CD4-positive, alpha-beta memory T cell (primary cell): ENCODE measurements at regions of chr5 and their contacts with region 1.

Region 1: DNA sequence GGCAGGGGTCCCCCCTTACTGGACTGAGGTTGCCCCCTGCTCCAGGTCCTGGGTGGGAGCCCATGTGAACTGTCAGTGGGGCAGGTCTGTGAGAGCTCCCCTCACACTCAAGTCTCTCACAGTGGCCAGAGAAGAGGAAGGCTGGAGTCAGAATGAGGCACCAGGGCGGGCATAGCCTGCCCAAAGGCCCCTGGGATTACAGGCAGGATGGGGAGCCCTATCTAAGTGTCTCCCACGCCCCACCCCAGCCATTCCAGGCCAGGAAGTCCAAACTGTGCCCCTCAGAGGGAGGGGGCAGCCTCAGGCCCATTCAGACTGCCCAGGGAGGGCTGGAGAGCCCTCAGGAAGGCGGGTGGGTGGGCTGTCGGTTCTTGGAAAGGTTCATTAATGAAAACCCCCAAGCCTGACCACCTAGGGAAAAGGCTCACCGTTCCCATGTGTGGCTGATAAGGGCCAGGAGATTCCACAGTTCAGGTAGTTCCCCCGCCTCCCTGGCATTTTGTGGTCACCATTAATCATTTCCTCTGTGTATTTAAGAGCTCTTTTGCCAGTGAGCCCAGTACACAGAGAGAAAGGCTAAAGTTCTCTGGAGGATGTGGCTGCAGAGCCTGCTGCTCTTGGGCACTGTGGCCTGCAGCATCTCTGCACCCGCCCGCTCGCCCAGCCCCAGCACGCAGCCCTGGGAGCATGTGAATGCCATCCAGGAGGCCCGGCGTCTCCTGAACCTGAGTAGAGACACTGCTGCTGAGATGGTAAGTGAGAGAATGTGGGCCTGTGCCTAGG is at the start of gene CSF2:
- DNase-seq: no peak
- H3K4me3 ChIP-seq: no peak within 1 kb of the TSS
- H3K4me3 Mint-ChIP-seq: peak within 1 kb of the TSS in 5 of 8 donors; percentile 1 to 45 (median 38)
- H3K27ac ChIP-seq: no peak within 1 kb of the TSS
- H3K27ac Mint-ChIP-seq: peak within 1 kb of the TSS; percentile 13 to 61 (median 36)
- H3K4me1 ChIP-seq: peaks cover 52% of the 10 kb centered on the region
- H3K4me1 Mint-ChIP-seq: peaks cover 24 to 84% (median 50%) of the 10 kb centered on the region in 4 donors
- H3K27me3 ChIP-seq: no peaks in the 10 kb centered on the region
- H3K27me3 Mint-ChIP-seq: no peaks in the 10 kb centered on the region
- total RNA-seq, gene CSF2: not detected

Region 2: DNA sequence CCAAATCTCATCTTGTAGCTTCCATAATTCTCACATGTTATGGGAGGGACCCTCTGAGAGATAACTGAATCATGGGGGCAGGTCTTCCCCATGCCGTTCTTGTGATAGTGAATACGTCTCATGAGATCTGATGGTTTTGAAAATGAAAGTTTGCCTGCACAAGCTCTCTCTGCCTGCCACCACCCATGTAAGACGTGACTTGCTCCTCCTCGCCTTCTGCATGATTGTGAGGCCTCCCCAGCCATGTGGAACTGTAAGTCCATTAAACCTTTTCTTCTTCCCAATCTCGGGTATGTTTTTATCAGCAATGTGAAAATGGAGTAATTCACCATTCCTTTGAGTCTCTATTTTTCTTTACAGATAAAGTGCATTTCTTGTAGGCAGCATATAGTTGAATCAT is 209.7 kb before region 1 on chr5:
- CTCF ChIA-PET with region 1: no interaction called
- POLR2A ChIA-PET with region 1: no interaction called
- intact Hi-C with region 1: no loop called
- DNase-seq: no peak
- H3K4me3 ChIP-seq: no peak overlapping the region
- H3K4me3 Mint-ChIP-seq: no peak overlapping the region
- H3K27ac ChIP-seq: no peak overlapping the region
- H3K27ac Mint-ChIP-seq: peak overlapping the region in 1 of 7 donors; percentile 49
- H3K4me1 ChIP-seq: no peaks in the 10 kb centered on the region
- H3K4me1 Mint-ChIP-seq: no peaks in the 10 kb centered on the region
- H3K27me3 ChIP-seq: no peaks in the 10 kb centered on the region
- H3K27me3 Mint-ChIP-seq: no peaks in the 10 kb centered on the region

Region 3: GRCh38 chr5:132094393-132095076 is 21.1 kb after region 1 on chr5:
- CTCF ChIA-PET with region 1: interaction called, 5 read pairs
- POLR2A ChIA-PET with region 1: interaction called, 3 read pairs
- intact Hi-C with region 1: loop called (anchors 2 kb)
- DNase-seq: peak in 1 of 5 donors; percentile 48
- H3K4me3 ChIP-seq: no peak overlapping the region
- H3K4me3 Mint-ChIP-seq: peak overlapping the region in 4 of 8 donors; percentile 21 to 42 (median 37)
- H3K27ac ChIP-seq: no peak overlapping the region
- H3K27ac Mint-ChIP-seq: peak overlapping the region in 4 of 7 donors; percentile 70 to 86 (median 74)
- H3K4me1 ChIP-seq: peaks cover 35% of the 10 kb centered on the region
- H3K4me1 Mint-ChIP-seq: peaks cover 29 to 74% (median 50%) of the 10 kb centered on the region in 4 donors
- H3K27me3 ChIP-seq: no peaks in the 10 kb centered on the region
- H3K27me3 Mint-ChIP-seq: no peaks in the 10 kb centered on the region

Region 4: GRCh38 chr5:132134384-132134783 is 61.0 kb after region 1 on chr5:
- CTCF ChIA-PET with region 1: interaction called, 73 read pairs
- POLR2A ChIA-PET with region 1: interaction called, 3 read pairs
- intact Hi-C with region 1: no loop called
- DNase-seq: peak in 4 of 5 donors; percentile 21 to 31 (median 28)
- H3K4me3 ChIP-seq: no peak overlapping the region
- H3K4me3 Mint-ChIP-seq: no peak overlapping the region
- H3K27ac ChIP-seq: no peak overlapping the region
- H3K27ac Mint-ChIP-seq: peak overlapping the region in 2 of 7 donors; percentile 26 to 70
- H3K4me1 ChIP-seq: no peaks in the 10 kb centered on the region
- H3K4me1 Mint-ChIP-seq: peaks cover 0 to 12% (median 0%) of the 10 kb centered on the region in 4 donors
- H3K27me3 ChIP-seq: no peaks in the 10 kb centered on the region
- H3K27me3 Mint-ChIP-seq: peaks cover 1 to 4% of the 10 kb centered on the region in 2 donors